ENCODE measurements at regions of chr9 and their contacts with region 1.

Region 1: GRCh38 chr9:90914868-90915483 is 113.4 kb downstream of the SYK start:
- DNase-seq: peak; percentile 74
- H3K4me3 ChIP-seq: no peak overlapping the region
- H3K27ac ChIP-seq: no peak overlapping the region
- H3K4me1 ChIP-seq: peaks cover under 1% of the 10 kb centered on the region
- H3K27me3 ChIP-seq: no peaks in the 10 kb centered on the region
- CTCF ChIP-seq: peak; percentile 80 to 90

Region 2: GRCh38 chr9:91089405-91090129 is 174.6 kb after region 1 on chr9:
- CTCF ChIA-PET with region 1: interaction called, 10 read pairs
- dilution Hi-C with region 1: no loop called
- in situ Hi-C with region 1: no loop called
- intact Hi-C with region 1: loop called (anchors 1 kb)
- DNase-seq: peak; percentile 29
- H3K4me3 ChIP-seq: no peak overlapping the region
- H3K27ac ChIP-seq: no peak overlapping the region
- H3K4me1 ChIP-seq: no peaks in the 10 kb centered on the region
- H3K27me3 ChIP-seq: no peaks in the 10 kb centered on the region
- CTCF ChIP-seq: peak; percentile 39 to 67

Region 3: GRCh38 chr9:91193658-91194391 is 278.8 kb after region 1 on chr9:
- CTCF ChIA-PET with region 1: no interaction called
- dilution Hi-C with region 1: no loop called
- in situ Hi-C with region 1: no loop called
- intact Hi-C with region 1: loop called (anchors 5 kb)
- DNase-seq: peak; percentile 48
- H3K4me3 ChIP-seq: no peak overlapping the region
- H3K27ac ChIP-seq: peak overlapping the region; percentile 45
- H3K4me1 ChIP-seq: peaks cover 38% of the 10 kb centered on the region
- H3K27me3 ChIP-seq: no peaks in the 10 kb centered on the region
- CTCF ChIP-seq: no peak

Region 4: GRCh38 chr9:91422758-91423711 is 508.1 kb after region 1 on chr9:
- CTCF ChIA-PET with region 1: interaction called, 18 read pairs
- dilution Hi-C with region 1: no loop called
- in situ Hi-C with region 1: loop called (anchors 5 kb)
- intact Hi-C with region 1: loop called (anchors 1 kb)
- DNase-seq: peak; percentile 66
- H3K4me3 ChIP-seq: peak overlapping the region; percentile 62 to 91 (median 67)
- H3K27ac ChIP-seq: peak overlapping the region; percentile 35
- H3K4me1 ChIP-seq: peaks cover 40% of the 10 kb centered on the region
- H3K27me3 ChIP-seq: no peaks in the 10 kb centered on the region
- CTCF ChIP-seq: peak in 1 of 2 donors; percentile 45

Region 5: DNA sequence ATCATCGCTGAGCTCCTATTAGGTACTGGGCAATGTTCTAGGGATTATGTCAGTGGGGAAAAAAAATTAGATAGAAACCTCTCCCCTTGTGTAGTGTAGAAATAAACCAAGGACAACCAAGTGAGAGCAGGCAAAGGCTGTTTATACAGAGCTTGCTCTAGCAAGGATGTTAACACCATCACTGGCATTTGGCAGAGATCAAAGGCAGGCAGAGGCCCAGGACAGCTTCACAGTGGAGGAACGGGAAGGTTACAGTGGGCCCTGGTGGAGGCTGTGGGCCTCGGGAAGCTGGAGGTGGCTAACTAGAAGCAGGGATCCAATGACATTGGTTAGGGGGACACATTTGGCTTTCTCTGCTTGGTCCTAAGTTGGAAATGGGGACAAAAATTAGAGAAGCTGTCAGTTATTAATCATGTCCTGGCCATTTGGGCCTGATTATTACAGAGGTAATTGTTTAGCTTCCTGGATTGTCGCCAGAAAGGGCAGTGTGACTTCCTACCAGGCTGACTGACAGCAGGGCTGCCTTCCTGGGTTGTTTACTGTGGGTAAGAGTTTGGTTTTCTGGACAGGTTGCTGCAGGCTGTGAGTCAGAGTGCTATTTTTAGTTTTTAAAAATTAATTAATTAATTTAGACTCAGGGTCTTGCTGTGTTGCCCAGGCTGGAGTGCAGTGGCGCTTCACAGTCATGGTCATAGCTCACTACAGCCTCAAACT is 775.7 kb after region 1 on chr9:
- CTCF ChIA-PET with region 1: interaction called, 10 read pairs
- dilution Hi-C with region 1: no loop called
- in situ Hi-C with region 1: no loop called
- intact Hi-C with region 1: no loop called
- DNase-seq: no peak
- H3K4me3 ChIP-seq: no peak overlapping the region
- H3K27ac ChIP-seq: no peak overlapping the region
- H3K4me1 ChIP-seq: no peaks in the 10 kb centered on the region
- H3K27me3 ChIP-seq: no peaks in the 10 kb centered on the region
- CTCF ChIP-seq: no peak